GM12878 (cell line): ENCODE measurements at regions of chr19 and their contacts with region 1.

Region 1: DNA sequence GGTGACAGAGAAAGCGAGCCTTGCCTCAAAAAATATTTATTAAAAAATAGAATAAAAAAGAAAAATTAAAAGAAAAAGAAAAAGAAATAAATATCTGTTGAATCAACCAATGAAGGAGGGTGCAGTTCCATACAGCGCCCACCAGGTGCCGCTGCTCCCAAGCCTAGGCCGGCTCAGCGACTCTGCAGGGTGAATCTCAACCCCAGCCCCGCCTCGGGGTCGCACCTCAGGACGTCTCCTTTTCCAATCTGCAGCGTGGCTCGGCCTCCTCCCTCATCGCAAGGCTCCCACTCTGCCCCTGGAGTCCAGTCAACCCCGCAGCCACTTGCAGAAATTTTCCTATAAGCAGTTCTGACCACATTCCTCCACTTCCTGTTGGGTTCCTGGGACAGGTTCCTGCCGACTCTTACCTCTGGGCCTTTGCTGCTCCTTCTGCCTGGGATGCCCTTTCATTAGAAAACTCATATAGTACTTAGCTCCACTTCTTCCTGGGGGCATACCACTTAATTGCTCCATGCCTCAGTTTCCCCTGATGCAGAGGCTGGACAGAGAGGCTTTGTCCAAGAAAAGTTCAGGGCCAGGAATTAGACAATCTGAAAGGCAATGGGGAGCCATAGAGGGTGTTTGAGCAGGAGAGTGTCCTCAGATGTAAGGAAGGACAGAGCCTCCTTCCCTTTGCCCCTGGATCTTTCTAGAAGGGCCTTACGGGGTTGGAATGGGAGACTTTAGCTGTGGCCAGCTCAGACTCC is 24.3 kb downstream of the NFILZ start:
- DNase-seq: no peak
- ATAC-seq: peak; percentile 73
- H3K4me3 ChIP-seq: no peak overlapping the region
- H3K27ac ChIP-seq: no peak overlapping the region
- H3K4me1 ChIP-seq: no peaks in the 10 kb centered on the region
- H3K27me3 ChIP-seq: no peaks in the 10 kb centered on the region
- CTCF ChIP-seq: peak; percentile 81 to 95 (median 88)
- EP300 ChIP-seq: no peak
- POLR2A ChIP-seq: no peak
- RAD21 ChIP-seq: peak; percentile 85

Region 2: DNA sequence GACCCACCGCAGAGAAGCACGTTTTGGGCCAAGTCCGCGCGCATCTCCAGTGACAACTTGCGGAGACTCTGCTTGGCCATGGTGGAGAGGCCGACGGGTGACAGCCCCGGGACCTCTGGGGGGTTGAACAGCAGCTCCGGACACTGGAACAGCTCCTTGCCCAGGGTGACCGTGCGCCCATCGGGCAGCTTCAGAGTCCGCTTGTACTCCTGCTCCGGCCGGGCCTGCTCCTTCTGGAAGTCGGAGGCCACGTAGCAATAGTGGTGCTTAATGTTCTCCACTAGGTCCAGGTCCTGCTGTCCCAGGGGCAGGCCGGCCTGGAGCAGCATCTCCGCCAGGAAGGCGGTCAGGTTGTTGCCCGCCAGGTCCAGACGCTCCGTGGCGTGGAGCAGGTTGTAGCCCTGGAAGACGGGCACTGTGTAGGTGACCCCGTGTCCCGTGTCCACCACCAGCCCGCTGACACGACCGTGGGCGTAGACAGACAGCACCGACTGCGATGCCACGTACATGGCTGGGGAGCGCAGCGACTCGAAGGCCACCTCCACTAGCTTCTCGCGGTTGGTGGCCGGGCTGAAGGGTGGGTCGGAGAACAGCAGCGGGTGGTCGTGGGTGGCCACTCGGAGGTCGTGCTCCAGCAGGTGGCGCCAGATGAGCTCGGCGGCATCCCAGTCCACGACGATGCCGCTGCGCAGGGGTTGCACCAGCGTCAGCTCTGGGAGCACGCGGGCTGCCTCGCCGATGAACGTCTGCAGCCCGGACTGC is 43.1 kb after region 1 on chr19:
- CTCF ChIA-PET with region 1: interaction called, 49 read pairs
- POLR2A ChIA-PET with region 1: no interaction called
- RAD21 ChIA-PET with region 1: interaction called, 14 read pairs
- SMC1A ChIA-PET with region 1: interaction called, 15 read pairs
- in situ Hi-C with region 1: no loop called
- intact Hi-C with region 1: loop called (anchors 1 kb)
- DNase-seq: no peak
- ATAC-seq: no peak
- H3K4me3 ChIP-seq: no peak overlapping the region
- H3K27ac ChIP-seq: no peak overlapping the region
- H3K4me1 ChIP-seq: no peaks in the 10 kb centered on the region
- H3K27me3 ChIP-seq: no peaks in the 10 kb centered on the region
- CTCF ChIP-seq: no peak
- EP300 ChIP-seq: no peak
- POLR2A ChIP-seq: no peak
- RAD21 ChIP-seq: no peak

Region 3: GRCh38 chr19:9075064-9075949 is 420.5 kb after region 1 on chr19:
- CTCF ChIA-PET with region 1: no interaction called
- POLR2A ChIA-PET with region 1: no interaction called
- RAD21 ChIA-PET with region 1: no interaction called
- SMC1A ChIA-PET with region 1: no interaction called
- in situ Hi-C with region 1: loop called (anchors 5 kb)
- intact Hi-C with region 1: loop called (anchors 10 kb)
- DNase-seq: no peak
- ATAC-seq: no peak
- H3K4me3 ChIP-seq: no peak overlapping the region
- H3K27ac ChIP-seq: no peak overlapping the region
- H3K4me1 ChIP-seq: no peaks in the 10 kb centered on the region
- H3K27me3 ChIP-seq: no peaks in the 10 kb centered on the region
- CTCF ChIP-seq: no peak
- EP300 ChIP-seq: no peak
- POLR2A ChIP-seq: no peak
- RAD21 ChIP-seq: no peak